Activated CD8-positive, alpha-beta T cell treated with anti-CD3 and anti-CD28 coated beads for 36 hours (primary cell): ENCODE measurements at regions of chr1 and their contacts with region 1.

Region 1: DNA sequence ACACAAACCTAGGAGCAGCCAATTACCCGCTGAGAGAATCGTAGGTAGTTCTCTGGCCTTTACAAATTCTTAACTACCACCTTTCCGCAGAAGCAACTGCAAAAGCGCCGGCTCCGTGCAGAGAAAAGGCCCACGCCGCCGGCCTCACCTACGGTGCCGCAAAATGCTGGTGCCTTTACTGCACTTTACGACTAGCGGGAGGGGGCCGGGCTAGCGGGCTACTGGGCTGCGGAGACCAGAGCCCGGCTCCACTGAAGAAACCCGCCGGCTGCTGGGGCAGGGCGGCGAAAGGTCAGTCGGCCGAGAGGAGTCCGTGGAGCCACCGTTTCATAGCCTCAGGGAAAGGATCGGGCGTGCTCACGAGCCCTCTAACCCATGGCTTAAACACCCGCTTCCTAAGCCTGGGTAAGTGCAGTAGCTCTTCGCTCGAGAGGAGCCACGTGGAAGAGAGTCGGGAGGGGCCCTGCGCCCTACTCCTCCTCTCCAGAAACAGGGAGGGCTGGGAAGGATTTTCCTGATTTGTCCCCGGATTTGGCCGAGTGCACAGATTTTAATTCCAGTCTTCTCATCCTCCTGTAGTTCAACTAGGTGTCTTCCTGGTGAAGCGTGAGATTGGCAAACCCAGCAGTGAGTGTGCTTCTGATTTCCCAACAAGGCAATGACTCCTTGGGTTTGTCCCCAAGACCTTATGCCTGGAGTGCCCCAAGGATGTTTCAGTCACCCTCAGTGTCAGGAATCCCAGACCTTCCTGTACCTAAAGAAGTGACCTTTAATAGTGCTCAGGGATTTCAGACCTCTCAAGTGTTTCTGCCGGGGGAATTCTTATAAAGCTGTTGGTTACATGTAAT is at the start of gene DPH5:
- DNase-seq: peak; percentile 95
- ATAC-seq: peak; percentile 96
- H3K4me3 Mint-ChIP-seq: peak within 1 kb of the TSS; percentile 99
- H3K27ac Mint-ChIP-seq: peak within 1 kb of the TSS; percentile 97
- H3K4me1 Mint-ChIP-seq: peaks cover 60% of the 10 kb centered on the region
- H3K27me3 Mint-ChIP-seq: no peaks in the 10 kb centered on the region
- CTCF ChIP-seq: no peak
- total RNA-seq, gene DPH5: 77.3 to 77.4 TPM

Region 2: GRCh38 chr1:100895540-100896483 is 130.1 kb before region 1 on chr1 and contains the start of gene SLC30A7:
- CTCF ChIA-PET with region 1: no interaction called
- POLR2A ChIA-PET with region 1: no interaction called
- intact Hi-C with region 1: no loop called
- DNase-seq: peak; percentile 97
- ATAC-seq: peak; percentile 77
- H3K4me3 Mint-ChIP-seq: peak within 1 kb of the TSS; percentile 98
- H3K27ac Mint-ChIP-seq: peak within 1 kb of the TSS; percentile 99
- H3K4me1 Mint-ChIP-seq: peaks cover 48% of the 10 kb centered on the region
- H3K27me3 Mint-ChIP-seq: no peaks in the 10 kb centered on the region
- CTCF ChIP-seq: no peak
- total RNA-seq, gene SLC30A7: 32.0 to 36.1 TPM

Region 3: GRCh38 chr1:100921109-100921706 is 104.7 kb before region 1 on chr1:
- CTCF ChIA-PET with region 1: no interaction called
- POLR2A ChIA-PET with region 1: no interaction called
- intact Hi-C with region 1: loop called (anchors 10 kb)
- DNase-seq: no peak
- ATAC-seq: no peak
- H3K4me3 Mint-ChIP-seq: no peak overlapping the region
- H3K27ac Mint-ChIP-seq: peak overlapping the region; percentile 64
- H3K4me1 Mint-ChIP-seq: peaks cover 53% of the 10 kb centered on the region
- H3K27me3 Mint-ChIP-seq: no peaks in the 10 kb centered on the region
- CTCF ChIP-seq: peak; percentile 93

Region 4: DNA sequence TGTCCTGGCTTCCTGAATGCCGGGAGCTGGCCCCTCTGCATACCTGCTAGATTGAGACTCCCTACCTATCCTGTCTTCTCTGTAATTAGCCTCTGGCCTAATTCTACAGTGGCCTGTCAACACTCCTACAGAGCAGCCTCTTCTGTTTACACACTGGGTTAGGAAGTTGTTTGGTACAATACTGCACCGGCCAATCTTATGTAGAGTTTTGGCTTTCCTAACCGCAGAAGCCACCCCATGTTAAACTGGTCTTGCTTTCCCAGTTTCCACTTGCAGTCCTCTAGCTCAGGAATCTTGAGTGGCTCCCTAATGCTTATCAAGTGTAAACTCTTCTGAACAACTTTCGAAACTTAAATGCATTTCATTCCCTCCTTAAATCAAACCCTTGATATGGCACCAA is 43.1 kb before region 1 on chr1:
- CTCF ChIA-PET with region 1: no interaction called
- POLR2A ChIA-PET with region 1: no interaction called
- intact Hi-C with region 1: no loop called
- DNase-seq: no peak
- ATAC-seq: no peak
- H3K4me3 Mint-ChIP-seq: no peak overlapping the region
- H3K27ac Mint-ChIP-seq: no peak overlapping the region
- H3K4me1 Mint-ChIP-seq: peaks cover 4% of the 10 kb centered on the region
- H3K27me3 Mint-ChIP-seq: no peaks in the 10 kb centered on the region
- CTCF ChIP-seq: no peak

Region 5: GRCh38 chr1:101071470-101071891 is 45.6 kb after region 1 on chr1:
- CTCF ChIA-PET with region 1: no interaction called
- POLR2A ChIA-PET with region 1: no interaction called
- intact Hi-C with region 1: loop called (anchors 5 kb)
- DNase-seq: no peak
- ATAC-seq: no peak
- H3K4me3 Mint-ChIP-seq: no peak overlapping the region
- H3K27ac Mint-ChIP-seq: no peak overlapping the region
- H3K4me1 Mint-ChIP-seq: peaks cover 48% of the 10 kb centered on the region
- H3K27me3 Mint-ChIP-seq: no peaks in the 10 kb centered on the region
- CTCF ChIP-seq: no peak

Region 6: DNA sequence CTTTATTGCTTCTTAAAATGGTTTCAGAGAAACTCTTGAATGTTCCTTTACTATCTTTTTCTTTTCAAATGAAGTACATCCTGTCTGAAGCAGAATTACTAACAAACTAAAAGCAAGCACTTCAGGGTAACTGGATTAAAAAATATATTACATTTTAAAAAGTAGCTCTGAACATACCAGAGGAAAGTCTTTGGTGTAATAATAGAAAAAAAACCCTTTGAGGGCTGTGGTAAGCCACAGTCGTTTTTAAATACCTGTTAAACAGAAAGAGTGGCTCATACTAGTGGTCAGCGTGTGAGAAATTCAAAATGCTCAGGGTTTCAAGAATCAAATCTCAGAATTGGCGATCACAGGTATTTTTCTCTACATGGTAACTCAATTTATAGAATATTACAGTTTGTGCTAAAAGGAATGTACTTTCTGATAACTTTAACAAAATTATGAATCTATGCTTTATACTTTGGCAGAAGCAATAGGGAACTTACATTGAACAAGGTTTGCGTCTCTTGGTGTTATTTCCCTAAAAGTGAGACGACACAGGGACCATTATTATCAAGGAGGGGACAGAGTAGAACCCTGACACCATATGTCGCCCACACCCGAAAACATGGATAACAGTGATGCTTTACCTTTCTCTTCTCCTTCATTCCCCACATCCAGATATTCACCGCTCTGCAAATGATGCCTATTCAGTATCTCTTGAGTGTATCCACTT is 96.7 kb after region 1 on chr1:
- CTCF ChIA-PET with region 1: no interaction called
- POLR2A ChIA-PET with region 1: no interaction called
- intact Hi-C with region 1: loop called (anchors 5 kb)
- DNase-seq: peak; percentile 65
- ATAC-seq: peak; percentile 77
- H3K4me3 Mint-ChIP-seq: peak overlapping the region; percentile 42
- H3K27ac Mint-ChIP-seq: peak overlapping the region; percentile 84
- H3K4me1 Mint-ChIP-seq: peaks cover 51% of the 10 kb centered on the region
- H3K27me3 Mint-ChIP-seq: no peaks in the 10 kb centered on the region
- CTCF ChIP-seq: no peak